ENCODE measurements at regions of chr15 and their contacts with region 1.

Region 1: DNA sequence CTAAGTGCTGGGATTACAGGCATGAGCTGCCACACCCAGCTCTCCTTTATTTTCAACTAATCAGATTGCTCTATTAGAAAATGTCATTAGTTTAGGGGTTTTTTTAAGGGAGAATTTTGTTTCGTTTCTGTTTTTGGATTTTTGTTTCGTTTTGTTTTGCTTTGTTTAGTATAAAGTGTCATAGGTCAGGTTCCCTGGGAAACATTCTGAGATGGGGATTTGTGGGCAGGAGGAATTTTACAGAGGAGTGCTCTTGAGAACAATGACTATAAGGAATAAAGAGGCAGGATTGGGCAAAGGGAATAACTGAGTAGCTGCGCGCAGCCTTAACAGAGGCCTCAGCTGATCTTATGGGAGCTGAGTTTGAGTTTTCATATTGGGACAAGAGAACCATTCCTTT is 86.8 kb upstream of the NR2F2 start:
- DNase-seq: no peak
- ATAC-seq: no peak
- H3K4me3 ChIP-seq: no peak overlapping the region
- H3K27ac ChIP-seq: no peak overlapping the region
- H3K4me1 ChIP-seq: no peaks in the 10 kb centered on the region
- H3K27me3 ChIP-seq: no peaks in the 10 kb centered on the region
- CTCF ChIP-seq: no peak
- POLR2A ChIP-seq: no peak

Region 2: GRCh38 chr15:96181873-96182301 is 61.8 kb before region 1 on chr15:
- intact Hi-C with region 1: no loop called
- DNase-seq: peak in 4 of 5 donors; percentile 30 to 63 (median 45)
- ATAC-seq: peak; percentile 47 to 85 (median 78)
- H3K4me3 ChIP-seq: no peak overlapping the region
- H3K27ac ChIP-seq: peak overlapping the region in 4 of 12 donors; percentile 2 to 52 (median 34)
- H3K4me1 ChIP-seq: peaks cover 0 to 16% (median 0%) of the 10 kb centered on the region in 12 donors
- H3K27me3 ChIP-seq: no peaks in the 10 kb centered on the region
- CTCF ChIP-seq: no peak
- POLR2A ChIP-seq: no peak

Region 3: DNA sequence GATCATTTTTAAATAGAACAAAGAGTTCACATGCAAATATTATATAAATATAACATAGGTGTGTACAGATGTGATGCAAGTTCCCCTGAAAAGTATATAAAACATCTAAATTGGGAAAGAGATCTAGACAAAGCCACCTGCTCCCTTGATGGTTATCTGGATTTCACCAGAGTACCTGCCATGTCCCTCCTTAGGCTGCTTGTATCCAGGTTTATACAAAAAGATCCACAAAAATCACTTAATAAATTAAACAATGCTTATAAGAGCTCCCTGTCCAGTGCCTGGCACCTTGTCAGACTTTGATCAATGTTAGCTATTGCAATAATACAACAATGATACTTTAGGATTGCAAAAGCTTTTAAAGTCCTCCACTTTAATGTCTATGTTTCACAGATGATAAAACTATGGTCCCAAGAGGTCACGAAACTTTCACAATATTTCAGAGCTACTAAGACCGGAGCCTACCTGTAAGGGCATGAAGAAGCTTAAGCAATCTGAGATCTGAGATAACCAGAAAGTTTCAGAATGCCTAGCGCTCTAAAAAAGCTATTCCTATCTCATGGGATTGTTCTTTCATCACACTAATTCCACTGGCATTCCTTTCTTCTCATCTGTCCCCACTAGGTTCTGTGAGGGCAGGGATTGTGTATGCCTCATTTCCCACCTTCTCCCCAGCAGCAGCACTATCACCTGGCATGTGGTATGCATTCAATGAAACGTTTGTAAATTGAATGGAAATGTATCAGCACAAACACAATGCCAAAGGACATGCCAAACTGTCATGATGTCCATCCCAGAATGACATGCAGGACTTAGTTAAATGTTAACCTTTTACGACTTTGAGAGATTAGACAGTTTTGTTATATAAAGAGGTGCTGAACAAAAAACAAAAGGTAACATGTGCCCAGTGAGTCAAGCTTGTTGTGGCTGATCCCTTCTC is 18.1 kb before region 1 on chr15:
- intact Hi-C with region 1: loop called in 1 of 10 experiments (anchors 2 kb)
- DNase-seq: no peak
- ATAC-seq: no peak
- H3K4me3 ChIP-seq: no peak overlapping the region
- H3K27ac ChIP-seq: no peak overlapping the region
- H3K4me1 ChIP-seq: no peaks in the 10 kb centered on the region
- H3K27me3 ChIP-seq: no peaks in the 10 kb centered on the region
- CTCF ChIP-seq: no peak
- POLR2A ChIP-seq: no peak

Measured in heart left ventricle (tissue), 16 donors.